IMR-90 (cell line): ENCODE measurements at regions of chr6 and their contacts with region 1.

Region 1: DNA sequence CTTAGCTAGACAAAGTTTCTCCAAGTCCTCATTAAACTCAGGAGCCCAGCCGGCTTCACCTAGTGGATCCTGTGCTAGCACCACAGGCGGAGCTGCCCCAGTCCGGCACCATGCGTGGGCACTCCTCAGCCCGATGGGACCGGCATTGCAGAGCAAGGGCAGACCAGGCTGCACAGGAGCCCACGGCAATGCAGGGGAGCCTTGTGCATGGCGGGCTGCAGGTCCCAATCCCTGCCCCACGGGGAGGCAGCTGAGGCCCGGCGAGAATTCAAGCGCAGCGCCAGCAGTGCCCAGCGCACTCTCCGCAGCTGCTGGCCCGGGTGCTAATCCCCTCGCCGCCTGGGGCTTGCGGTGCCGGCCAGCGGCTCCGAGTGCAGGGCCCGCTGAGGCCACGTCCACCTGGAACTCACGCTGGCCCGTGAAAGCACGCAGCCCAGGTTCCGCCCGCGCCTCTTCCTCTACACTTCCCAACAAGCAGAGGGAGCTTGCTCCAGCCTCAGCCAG is 292.3 kb upstream of the EYS start:
- DNase-seq: no peak
- ATAC-seq: no peak
- H3K4me3 ChIP-seq: no peak overlapping the region
- H3K27ac ChIP-seq: no peak overlapping the region
- H3K4me1 ChIP-seq: no peaks in the 10 kb centered on the region
- H3K27me3 ChIP-seq: no peaks in the 10 kb centered on the region
- CTCF ChIP-seq: no peak
- POLR2A ChIP-seq: no peak
- RAD21 ChIP-seq: no peak

Region 2: DNA sequence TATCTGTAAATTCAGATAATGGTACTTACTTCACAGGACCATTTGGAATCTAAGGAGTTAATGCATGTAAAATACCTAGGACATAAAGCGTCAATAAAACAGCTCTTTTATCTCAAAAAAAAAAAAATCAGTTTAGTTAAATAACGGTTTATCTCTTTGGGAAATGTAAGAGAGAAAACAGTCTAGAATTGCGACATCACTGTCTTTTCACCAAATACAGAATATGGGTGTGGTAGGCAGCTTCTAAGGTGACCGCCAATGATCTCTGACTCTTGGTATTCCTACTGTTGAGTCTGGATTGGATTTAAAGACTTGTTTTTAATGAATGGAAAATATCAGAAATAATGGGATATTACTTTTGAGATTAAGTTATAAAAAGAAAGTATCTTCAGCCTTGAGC is 403.8 kb before region 1 on chr6:
- CTCF ChIA-PET with region 1: no interaction called
- POLR2A ChIA-PET with region 1: no interaction called
- dilution Hi-C with region 1: no loop called
- in situ Hi-C with region 1: no loop called
- intact Hi-C with region 1: no loop called
- DNase-seq: no peak
- ATAC-seq: no peak
- H3K4me3 ChIP-seq: no peak overlapping the region
- H3K27ac ChIP-seq: no peak overlapping the region
- H3K4me1 ChIP-seq: no peaks in the 10 kb centered on the region
- H3K27me3 ChIP-seq: no peaks in the 10 kb centered on the region
- CTCF ChIP-seq: no peak
- POLR2A ChIP-seq: no peak
- RAD21 ChIP-seq: no peak

Region 3: GRCh38 chr6:65979120-65979519 is 20.2 kb before region 1 on chr6:
- CTCF ChIA-PET with region 1: no interaction called
- POLR2A ChIA-PET with region 1: no interaction called
- dilution Hi-C with region 1: no loop called
- in situ Hi-C with region 1: no loop called
- intact Hi-C with region 1: no loop called
- DNase-seq: no peak
- ATAC-seq: no peak
- H3K4me3 ChIP-seq: no peak overlapping the region
- H3K27ac ChIP-seq: no peak overlapping the region
- H3K4me1 ChIP-seq: no peaks in the 10 kb centered on the region
- H3K27me3 ChIP-seq: no peaks in the 10 kb centered on the region
- CTCF ChIP-seq: no peak
- POLR2A ChIP-seq: no peak
- RAD21 ChIP-seq: no peak

Region 4: GRCh38 chr6:66561479-66561878 is 562.1 kb after region 1 on chr6:
- CTCF ChIA-PET with region 1: no interaction called
- POLR2A ChIA-PET with region 1: no interaction called
- dilution Hi-C with region 1: no loop called
- in situ Hi-C with region 1: no loop called
- intact Hi-C with region 1: loop called (anchors 5 kb)
- DNase-seq: no peak
- ATAC-seq: no peak
- H3K4me3 ChIP-seq: no peak overlapping the region
- H3K27ac ChIP-seq: no peak overlapping the region
- H3K4me1 ChIP-seq: no peaks in the 10 kb centered on the region
- H3K27me3 ChIP-seq: no peaks in the 10 kb centered on the region
- CTCF ChIP-seq: no peak
- POLR2A ChIP-seq: no peak
- RAD21 ChIP-seq: no peak